Activated naive CD4-positive, alpha-beta T cell treated with anti-CD3 and anti-CD28 coated beads for 36 hours (primary cell): ENCODE measurements at regions of chr7 and their contacts with region 1.

Region 1: DNA sequence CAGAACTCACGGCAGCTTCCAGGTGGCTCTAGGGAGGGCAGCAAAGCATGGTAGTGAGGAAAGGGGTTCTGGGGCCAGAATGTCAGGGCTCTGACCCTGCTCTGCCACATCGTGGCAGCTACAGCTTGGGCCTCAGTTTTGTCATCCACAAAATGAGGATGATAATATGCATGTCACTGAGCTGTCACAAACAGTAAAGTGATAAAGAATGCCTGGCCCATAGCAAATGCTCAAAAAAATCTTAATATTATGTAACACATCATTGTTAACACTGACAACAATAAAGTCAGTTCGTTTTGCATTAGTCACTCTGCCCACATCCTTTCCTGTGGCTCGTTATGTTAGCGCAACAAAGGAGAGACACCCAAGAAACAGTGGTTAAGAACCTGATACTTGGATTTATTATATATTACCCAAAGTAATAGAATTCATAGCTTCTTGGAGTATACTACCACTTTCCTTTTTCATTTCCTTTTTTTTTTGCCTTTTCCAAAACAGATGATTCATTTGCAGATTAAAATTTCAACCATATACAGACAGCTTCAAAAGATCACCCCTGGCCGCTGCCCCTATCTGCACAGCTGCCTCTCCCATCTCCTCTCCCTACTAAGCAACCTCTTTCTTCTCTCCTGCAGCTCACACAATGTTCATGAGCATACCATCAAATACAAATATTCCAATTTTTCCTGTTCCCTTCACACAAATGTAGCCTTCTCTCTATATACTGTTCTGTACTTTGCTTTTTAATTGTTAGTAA is 45.5 kb upstream of the DDC start:
- DNase-seq: peak; percentile 80
- H3K4me3 Mint-ChIP-seq: no peak overlapping the region
- H3K27ac Mint-ChIP-seq: no peak overlapping the region
- H3K4me1 Mint-ChIP-seq: peaks cover 26% of the 10 kb centered on the region
- H3K27me3 Mint-ChIP-seq: no peaks in the 10 kb centered on the region

Region 2: GRCh38 chr7:50595491-50596102 is 15.1 kb before region 1 on chr7:
- CTCF ChIA-PET with region 1: interaction called, 3 read pairs
- intact Hi-C with region 1: loop called (anchors 1 kb)
- DNase-seq: peak; percentile 16
- H3K4me3 Mint-ChIP-seq: no peak overlapping the region
- H3K27ac Mint-ChIP-seq: no peak overlapping the region
- H3K4me1 Mint-ChIP-seq: peaks cover 15% of the 10 kb centered on the region
- H3K27me3 Mint-ChIP-seq: peaks cover 2% of the 10 kb centered on the region

Region 3: GRCh38 chr7:50679218-50680007 is 68.7 kb after region 1 on chr7:
- CTCF ChIA-PET with region 1: no interaction called
- intact Hi-C with region 1: loop called (anchors 1 kb)
- DNase-seq: no peak
- H3K4me3 Mint-ChIP-seq: no peak overlapping the region
- H3K27ac Mint-ChIP-seq: no peak overlapping the region
- H3K4me1 Mint-ChIP-seq: no peaks in the 10 kb centered on the region
- H3K27me3 Mint-ChIP-seq: no peaks in the 10 kb centered on the region

Region 4: GRCh38 chr7:51067757-51068156 is 457.1 kb after region 1 on chr7:
- CTCF ChIA-PET with region 1: no interaction called
- intact Hi-C with region 1: loop called (anchors 2 kb)
- DNase-seq: peak; percentile 75
- H3K4me3 Mint-ChIP-seq: no peak overlapping the region
- H3K27ac Mint-ChIP-seq: no peak overlapping the region
- H3K4me1 Mint-ChIP-seq: no peaks in the 10 kb centered on the region
- H3K27me3 Mint-ChIP-seq: no peaks in the 10 kb centered on the region

Region 5: DNA sequence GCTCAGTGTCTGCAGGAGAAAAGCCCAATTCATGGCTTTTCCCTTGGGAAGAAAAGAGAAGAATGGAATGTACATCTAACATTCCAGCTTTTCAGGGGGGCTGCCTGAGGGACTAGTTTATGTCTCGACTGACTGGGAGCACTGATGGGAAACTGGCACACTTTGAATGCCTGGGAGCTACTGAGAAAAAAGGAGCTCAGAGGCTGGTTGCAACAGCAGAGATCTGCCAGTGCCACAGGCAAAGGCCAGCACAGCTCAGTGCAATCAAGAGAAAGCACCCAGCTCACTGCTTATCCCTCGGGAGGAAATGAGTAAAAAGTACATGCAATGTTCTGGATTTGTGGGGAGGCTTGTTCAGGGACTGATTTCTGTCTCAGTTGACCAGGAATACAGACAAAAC is 479.7 kb after region 1 on chr7:
- CTCF ChIA-PET with region 1: no interaction called
- intact Hi-C with region 1: no loop called
- DNase-seq: no peak
- H3K4me3 Mint-ChIP-seq: no peak overlapping the region
- H3K27ac Mint-ChIP-seq: no peak overlapping the region
- H3K4me1 Mint-ChIP-seq: no peaks in the 10 kb centered on the region
- H3K27me3 Mint-ChIP-seq: peaks cover 9% of the 10 kb centered on the region

Region 6: GRCh38 chr7:51141451-51142003 is 530.8 kb after region 1 on chr7:
- CTCF ChIA-PET with region 1: no interaction called
- intact Hi-C with region 1: loop called (anchors 5 kb)
- DNase-seq: peak; percentile 31
- H3K4me3 Mint-ChIP-seq: no peak overlapping the region
- H3K27ac Mint-ChIP-seq: no peak overlapping the region
- H3K4me1 Mint-ChIP-seq: peaks cover 14% of the 10 kb centered on the region
- H3K27me3 Mint-ChIP-seq: no peaks in the 10 kb centered on the region

Region 7: GRCh38 chr7:51918581-51918980 is 1307.9 kb after region 1 on chr7:
- CTCF ChIA-PET with region 1: no interaction called
- intact Hi-C with region 1: no loop called
- DNase-seq: no peak
- H3K4me3 Mint-ChIP-seq: no peak overlapping the region
- H3K27ac Mint-ChIP-seq: no peak overlapping the region
- H3K4me1 Mint-ChIP-seq: no peaks in the 10 kb centered on the region
- H3K27me3 Mint-ChIP-seq: no peaks in the 10 kb centered on the region